ENCODE measurements at regions of chr5 and their contacts with region 1.

Region 1: DNA sequence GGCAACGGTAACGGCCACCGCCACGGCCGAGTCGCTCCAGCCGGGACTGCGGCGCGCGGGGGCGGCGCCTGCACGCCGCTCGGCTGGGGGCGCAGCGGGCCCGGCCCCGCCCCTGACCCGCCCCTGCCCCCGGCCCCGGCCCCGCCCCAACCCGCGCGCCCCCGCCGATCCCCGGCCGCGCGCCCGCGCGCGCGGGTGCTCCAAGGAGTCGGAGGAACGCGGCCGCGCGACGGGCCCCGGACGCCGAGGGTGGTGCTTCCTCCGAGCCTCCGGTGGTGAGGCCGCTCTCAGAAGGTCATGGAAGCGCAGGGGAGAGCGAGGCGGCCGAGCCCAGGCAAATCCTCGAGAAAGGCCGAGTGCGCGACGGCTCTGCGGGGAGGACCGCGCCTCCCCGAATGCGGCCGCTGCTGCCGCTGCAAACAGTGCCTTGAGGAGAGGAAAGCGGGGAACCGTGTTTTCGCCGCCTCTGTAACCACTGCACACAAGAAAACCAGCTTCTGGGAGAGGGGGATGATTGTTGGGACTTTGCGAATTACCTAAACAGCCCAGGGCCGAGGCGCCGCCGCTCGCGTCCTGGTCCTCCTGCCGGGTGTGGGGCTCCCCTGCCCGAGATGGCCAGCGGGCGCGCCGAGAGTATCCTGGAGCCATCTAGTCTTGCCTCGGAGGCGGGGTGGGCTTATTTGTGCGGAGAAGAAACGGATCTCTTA is at the start of gene LIFR:
- DNase-seq: peak; percentile 93
- ATAC-seq: peak; percentile 87
- total RNA-seq, gene LIFR: 61.1 TPM

Region 2: DNA sequence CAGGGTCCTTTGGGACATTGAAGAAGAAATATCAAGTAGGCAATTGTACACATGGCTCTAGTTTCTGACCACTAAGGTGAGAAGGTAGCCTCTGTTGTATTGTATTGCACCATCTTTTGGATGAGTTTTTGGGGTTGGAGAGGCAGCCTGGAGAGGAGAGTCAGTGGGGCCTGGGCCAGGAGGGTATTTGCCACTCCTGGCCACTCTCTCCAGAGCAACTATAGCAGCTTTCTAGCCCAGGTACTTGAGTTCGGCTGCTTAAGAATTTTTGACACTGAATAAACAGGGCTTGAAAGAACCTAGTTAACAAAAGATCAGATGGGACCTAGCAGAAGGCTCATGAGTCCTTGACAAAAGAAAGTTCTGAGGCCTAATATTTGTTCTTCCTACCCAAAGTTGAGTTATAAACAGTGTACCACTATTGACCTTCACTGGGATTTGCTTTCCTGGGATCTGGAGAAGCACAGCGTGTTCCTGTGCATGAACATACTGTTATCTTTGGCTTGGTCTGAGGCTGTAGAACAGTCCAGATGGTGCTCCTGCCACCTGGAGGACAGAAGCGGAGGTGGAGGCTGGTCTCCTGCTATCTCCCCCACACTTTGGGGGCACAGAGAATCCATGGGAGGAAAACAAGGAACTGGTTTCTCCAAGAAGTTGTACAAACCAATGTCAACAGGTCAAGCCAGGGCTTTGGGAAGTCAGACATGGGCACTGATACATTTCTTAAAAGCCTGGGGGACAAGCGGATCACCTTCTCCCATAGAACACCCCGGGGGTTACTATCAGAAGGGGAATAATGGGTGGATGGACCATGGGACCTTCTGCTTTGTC is 110.1 kb after region 1 on chr5:
- intact Hi-C with region 1: loop called (anchors 10 kb)
- DNase-seq: peak; percentile 44
- ATAC-seq: peak; percentile 94

Measured in left ventricle myocardium superior (tissue), 1 donor.